Activated CD4-positive, alpha-beta T cell treated with anti-CD3 and anti-CD28 coated beads for 36 hours (primary cell): ENCODE measurements at regions of chr3 and their contacts with region 1.

Region 1: DNA sequence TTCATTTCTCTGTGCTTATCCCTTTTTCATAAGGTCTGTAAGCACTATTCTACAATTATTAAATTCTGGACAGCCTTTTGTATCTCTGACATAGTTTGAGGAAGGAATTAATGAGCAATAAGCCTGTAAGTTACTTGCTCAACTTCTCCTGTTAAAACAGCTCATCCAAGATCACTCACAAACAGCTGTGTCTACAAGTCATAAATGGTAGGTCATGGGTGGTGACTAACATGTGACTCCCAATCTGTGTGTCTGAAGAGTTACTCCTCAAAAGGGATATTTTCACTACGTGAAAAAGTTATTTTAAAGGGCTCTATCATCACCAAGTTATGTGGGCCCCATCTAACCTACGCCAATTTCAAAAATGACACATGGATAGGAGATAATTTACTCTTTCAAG is 145.2 kb upstream of the CBLB start:
- DNase-seq: peak; percentile 19
- ATAC-seq: peak; percentile 72
- H3K4me3 Mint-ChIP-seq: no peak overlapping the region
- H3K27ac Mint-ChIP-seq: peak overlapping the region; percentile 68
- H3K4me1 Mint-ChIP-seq: peaks cover 50% of the 10 kb centered on the region
- H3K27me3 Mint-ChIP-seq: no peaks in the 10 kb centered on the region

Region 2: DNA sequence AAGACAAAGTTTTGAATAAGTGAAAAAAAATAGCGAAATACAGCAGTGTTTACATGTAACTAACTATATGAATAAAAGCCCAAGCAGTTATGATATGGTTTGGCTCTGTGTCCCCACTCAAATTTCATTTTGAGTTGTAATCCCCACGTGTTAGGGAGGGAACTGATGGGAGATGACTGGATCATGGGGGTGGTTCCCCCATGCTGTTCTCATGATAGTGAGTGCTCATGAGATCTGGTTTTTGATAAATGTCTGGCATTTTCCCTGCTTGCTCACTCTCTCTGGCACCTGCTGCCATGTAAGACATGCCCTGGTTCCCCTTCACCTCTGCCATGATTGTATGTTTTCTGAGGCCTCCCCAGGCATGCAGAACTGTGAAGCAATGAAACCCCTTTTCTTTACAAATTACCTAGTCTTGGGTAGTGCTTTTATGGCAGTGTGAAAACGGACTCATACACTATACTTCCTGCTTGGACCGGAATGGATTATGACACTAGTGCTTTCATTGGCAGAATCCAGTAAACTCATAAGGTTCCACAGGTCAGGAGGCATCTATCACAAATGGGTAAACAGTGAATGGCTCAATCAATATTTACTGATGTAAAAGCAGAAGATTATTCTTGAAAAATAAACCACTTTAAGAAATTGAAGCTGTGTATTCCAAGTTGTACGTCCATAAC is 337.2 kb before region 1 on chr3:
- CTCF ChIA-PET with region 1: no interaction called
- POLR2A ChIA-PET with region 1: no interaction called
- intact Hi-C with region 1: loop called in 1 of 2 experiments (anchors 10 kb)
- DNase-seq: peak; percentile 74
- ATAC-seq: peak; percentile 94
- H3K4me3 Mint-ChIP-seq: peak overlapping the region; percentile 27
- H3K27ac Mint-ChIP-seq: peak overlapping the region; percentile 87
- H3K4me1 Mint-ChIP-seq: peaks cover 27% of the 10 kb centered on the region
- H3K27me3 Mint-ChIP-seq: no peaks in the 10 kb centered on the region

Region 3: GRCh38 chr3:105752744-105753415 is 261.1 kb before region 1 on chr3:
- CTCF ChIA-PET with region 1: no interaction called
- POLR2A ChIA-PET with region 1: no interaction called
- intact Hi-C with region 1: loop called in 1 of 2 experiments (anchors 5 kb)
- DNase-seq: peak; percentile 55
- ATAC-seq: peak; percentile 76
- H3K4me3 Mint-ChIP-seq: peak overlapping the region; percentile 42
- H3K27ac Mint-ChIP-seq: peak overlapping the region; percentile 95
- H3K4me1 Mint-ChIP-seq: peaks cover 78% of the 10 kb centered on the region
- H3K27me3 Mint-ChIP-seq: no peaks in the 10 kb centered on the region

Region 4: GRCh38 chr3:105944721-105945120 is 69.2 kb before region 1 on chr3:
- CTCF ChIA-PET with region 1: no interaction called
- POLR2A ChIA-PET with region 1: no interaction called
- intact Hi-C with region 1: no loop called
- DNase-seq: no peak
- ATAC-seq: no peak
- H3K4me3 Mint-ChIP-seq: no peak overlapping the region
- H3K27ac Mint-ChIP-seq: no peak overlapping the region
- H3K4me1 Mint-ChIP-seq: no peaks in the 10 kb centered on the region
- H3K27me3 Mint-ChIP-seq: no peaks in the 10 kb centered on the region

Region 5: DNA sequence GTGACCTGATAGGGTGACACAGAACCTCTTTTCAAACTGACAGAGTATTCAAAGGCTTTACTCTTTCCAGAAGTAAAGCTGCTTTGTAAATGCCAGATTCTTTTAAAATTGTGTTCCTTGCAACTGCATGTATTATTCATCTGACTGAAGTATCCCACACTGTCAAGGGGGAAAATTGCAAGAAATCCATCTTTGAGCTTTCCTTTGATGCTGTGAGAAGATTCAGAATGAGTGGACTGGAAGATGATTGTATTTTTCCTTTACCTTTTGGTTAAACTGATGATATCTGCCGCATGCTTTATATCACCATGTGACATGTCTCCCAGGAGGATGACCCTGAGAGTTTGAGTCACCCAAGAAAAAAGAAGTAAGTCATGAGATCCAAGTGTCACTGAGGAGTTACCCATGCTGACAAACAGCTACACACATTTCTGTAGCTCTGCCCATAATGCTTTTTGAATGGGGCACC is 105.7 kb after region 1 on chr3:
- CTCF ChIA-PET with region 1: no interaction called
- POLR2A ChIA-PET with region 1: no interaction called
- intact Hi-C with region 1: loop called (anchors 2 kb)
- DNase-seq: peak; percentile 28
- ATAC-seq: peak; percentile 99
- H3K4me3 Mint-ChIP-seq: no peak overlapping the region
- H3K27ac Mint-ChIP-seq: peak overlapping the region; percentile 83
- H3K4me1 Mint-ChIP-seq: peaks cover 26% of the 10 kb centered on the region
- H3K27me3 Mint-ChIP-seq: no peaks in the 10 kb centered on the region

Region 6: DNA sequence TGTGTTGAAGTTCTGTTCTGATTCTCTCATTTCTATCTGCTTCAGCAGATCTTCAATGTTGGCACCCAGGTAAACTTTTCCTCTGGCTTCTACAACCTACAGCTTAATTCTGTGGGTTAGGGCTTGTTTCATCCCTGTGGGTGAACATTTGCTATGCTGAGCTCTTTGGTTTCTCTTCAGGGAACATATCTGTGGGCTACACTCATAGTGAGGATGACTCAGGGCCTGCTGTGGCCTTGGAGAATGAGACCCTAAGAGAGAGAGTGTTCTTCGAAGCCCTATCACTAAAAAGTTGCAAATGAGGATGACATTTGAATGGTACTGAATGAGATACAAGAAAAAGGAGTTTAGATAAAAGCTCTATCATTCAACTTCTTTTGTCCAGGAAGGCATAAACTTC is 201.1 kb after region 1 on chr3:
- CTCF ChIA-PET with region 1: no interaction called
- POLR2A ChIA-PET with region 1: no interaction called
- intact Hi-C with region 1: loop called in 1 of 2 experiments (anchors 2 kb)
- DNase-seq: peak; percentile 62
- ATAC-seq: peak; percentile 91
- H3K4me3 Mint-ChIP-seq: no peak overlapping the region
- H3K27ac Mint-ChIP-seq: peak overlapping the region; percentile 73
- H3K4me1 Mint-ChIP-seq: peaks cover 59% of the 10 kb centered on the region
- H3K27me3 Mint-ChIP-seq: no peaks in the 10 kb centered on the region